ENCODE measurements at regions of chr10 and their contacts with region 1.

Region 1: DNA sequence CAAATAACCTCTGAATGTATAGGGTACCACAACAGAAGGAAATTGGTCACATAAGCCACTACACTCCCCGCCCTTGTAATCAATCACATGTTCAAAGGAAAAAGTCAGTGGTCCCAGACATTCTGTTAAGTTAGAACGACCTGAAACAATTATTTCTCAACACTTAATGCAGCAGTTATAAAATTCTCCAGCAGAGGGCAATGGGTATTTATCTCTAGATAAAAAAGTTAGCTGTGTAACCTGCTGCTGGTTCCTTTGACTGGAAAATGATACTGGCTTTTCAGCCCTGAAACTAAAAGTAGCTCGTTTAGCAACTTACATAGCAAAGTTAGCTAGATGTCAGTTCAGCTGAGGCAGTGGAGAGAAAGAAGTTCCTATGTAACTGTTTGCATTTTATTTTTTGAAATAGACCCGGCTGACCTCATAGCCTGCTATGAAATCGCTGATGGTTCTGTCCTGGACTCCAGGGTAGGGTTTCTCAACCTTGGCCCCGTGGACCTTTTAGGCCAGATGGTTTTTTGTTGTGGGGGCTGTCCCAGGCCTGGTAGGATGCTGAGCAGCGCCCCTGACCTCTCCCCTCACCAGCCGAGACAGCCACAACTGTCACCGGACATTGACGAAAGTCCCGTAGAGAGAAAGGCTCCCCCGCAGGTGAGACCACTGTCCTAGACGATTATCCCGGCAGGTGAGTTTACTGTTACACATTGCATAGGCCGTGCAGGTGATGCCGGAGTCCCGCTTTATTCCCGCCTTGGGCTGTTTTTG is 40.2 kb upstream of the PROSER2 start:
- DNase-seq: peak; percentile 24
- ATAC-seq: peak; percentile 64
- H3K4me3 ChIP-seq: no peak overlapping the region
- H3K27ac ChIP-seq: no peak overlapping the region
- H3K4me1 ChIP-seq: no peaks in the 10 kb centered on the region
- H3K27me3 ChIP-seq: no peaks in the 10 kb centered on the region
- CTCF ChIP-seq: peak; percentile 71

Region 2: GRCh38 chr10:11424456-11425297 is 358.3 kb before region 1 on chr10:
- CTCF ChIA-PET with region 1: no interaction called
- POLR2A ChIA-PET with region 1: interaction called, 10 read pairs
- in situ Hi-C with region 1: no loop called
- intact Hi-C with region 1: no loop called
- DNase-seq: peak; percentile 25
- ATAC-seq: peak; percentile 89
- H3K4me3 ChIP-seq: no peak overlapping the region
- H3K27ac ChIP-seq: no peak overlapping the region
- H3K4me1 ChIP-seq: no peaks in the 10 kb centered on the region
- H3K27me3 ChIP-seq: no peaks in the 10 kb centered on the region
- CTCF ChIP-seq: peak; percentile 89

Region 3: DNA sequence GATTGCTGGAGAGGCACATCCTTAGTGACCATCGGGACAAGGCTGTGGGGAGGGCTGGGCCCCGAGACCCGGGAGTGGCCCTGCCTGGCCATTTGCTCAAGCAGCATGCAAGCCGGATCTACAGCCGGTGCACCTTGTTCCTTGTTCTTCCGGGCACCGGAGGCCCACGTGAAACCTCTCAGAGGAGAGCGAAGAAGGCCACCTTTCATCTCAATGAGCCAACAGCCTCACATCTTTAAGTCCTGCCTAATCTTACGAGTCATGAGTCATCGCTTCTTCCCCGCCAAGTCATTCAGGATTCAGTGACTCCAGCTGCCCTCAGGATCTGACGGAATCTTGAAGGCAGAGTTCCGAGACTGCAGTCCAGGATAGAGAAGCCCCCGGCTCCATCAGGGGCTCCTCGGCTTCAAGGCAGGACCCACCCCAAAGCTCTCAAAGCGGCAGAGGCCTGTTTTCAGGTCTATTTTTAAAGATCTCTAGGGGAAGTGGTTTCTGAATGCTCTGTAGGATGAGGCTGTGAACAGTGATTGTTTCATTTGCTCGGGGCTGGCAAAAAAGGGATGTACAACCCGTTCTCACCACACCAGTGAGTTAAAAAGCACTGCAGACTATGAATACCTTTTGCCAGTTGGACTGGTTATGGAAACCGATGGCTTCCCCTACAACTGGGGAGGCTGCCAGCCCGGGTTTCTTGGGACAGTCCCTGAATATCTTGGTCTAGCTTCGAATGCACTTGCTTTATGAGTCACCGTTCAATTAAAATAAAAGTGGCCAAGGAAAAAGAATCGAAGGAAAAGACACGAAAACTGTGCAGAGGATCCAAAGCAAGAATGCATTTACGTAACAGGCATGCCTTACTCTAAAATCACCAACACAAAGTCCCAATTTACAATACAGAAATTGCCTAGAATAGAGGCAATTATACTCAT is 98.0 kb before region 1 on chr10:
- CTCF ChIA-PET with region 1: no interaction called
- POLR2A ChIA-PET with region 1: no interaction called
- in situ Hi-C with region 1: no loop called
- intact Hi-C with region 1: no loop called
- DNase-seq: peak; percentile 43
- ATAC-seq: peak; percentile 90
- H3K4me3 ChIP-seq: peak overlapping the region; percentile 18 to 59
- H3K27ac ChIP-seq: peak overlapping the region; percentile 66
- H3K4me1 ChIP-seq: peaks cover 7% of the 10 kb centered on the region; the same call in 1 of the 2 replicates
- H3K27me3 ChIP-seq: no peaks in the 10 kb centered on the region
- CTCF ChIP-seq: no peak

Region 4: GRCh38 chr10:11750420-11750819 is 32.6 kb before region 1 on chr10:
- CTCF ChIA-PET with region 1: no interaction called
- POLR2A ChIA-PET with region 1: interaction called, 14 read pairs
- in situ Hi-C with region 1: no loop called
- intact Hi-C with region 1: no loop called
- DNase-seq: no peak
- ATAC-seq: no peak
- H3K4me3 ChIP-seq: no peak overlapping the region
- H3K27ac ChIP-seq: no peak overlapping the region
- H3K4me1 ChIP-seq: no peaks in the 10 kb centered on the region
- H3K27me3 ChIP-seq: no peaks in the 10 kb centered on the region
- CTCF ChIP-seq: no peak

Region 5: DNA sequence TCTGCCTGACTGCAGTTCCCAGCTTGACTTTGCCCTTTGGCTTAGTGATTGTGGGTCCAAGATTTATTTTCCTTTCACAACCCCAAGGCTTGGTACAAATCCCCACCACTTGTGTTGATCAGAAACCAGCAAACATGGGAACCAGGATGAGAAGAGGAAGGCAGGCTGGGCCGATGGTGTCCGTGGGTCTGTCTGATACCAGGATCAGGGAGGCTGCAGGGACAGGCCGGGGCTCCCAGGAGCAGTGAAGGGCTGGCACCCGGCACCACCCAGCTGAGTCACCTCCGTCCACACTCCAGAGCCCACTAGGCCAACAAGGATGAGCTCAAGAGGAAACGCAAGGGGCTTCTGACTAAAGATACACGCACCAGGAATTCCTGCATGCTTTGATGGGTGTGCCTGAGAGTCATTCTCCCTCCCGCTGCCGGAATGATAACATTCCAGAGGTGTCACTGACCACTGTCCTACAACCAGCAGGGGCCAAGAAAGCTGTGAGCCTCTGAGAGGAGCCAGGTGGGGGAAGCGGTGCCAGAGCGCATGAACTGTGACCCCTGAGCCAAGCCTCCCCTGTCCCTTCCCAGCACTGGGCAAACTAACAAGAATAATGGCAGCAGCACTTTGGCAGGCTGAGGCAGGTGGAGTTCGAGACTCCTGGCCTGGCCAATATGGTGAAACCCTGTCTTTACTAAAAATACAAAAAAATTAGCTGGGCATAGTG is 10.9 kb after region 1 on chr10:
- CTCF ChIA-PET with region 1: interaction called, 11 read pairs
- POLR2A ChIA-PET with region 1: no interaction called
- in situ Hi-C with region 1: no loop called
- intact Hi-C with region 1: no loop called
- DNase-seq: no peak
- ATAC-seq: no peak
- H3K4me3 ChIP-seq: no peak overlapping the region
- H3K27ac ChIP-seq: no peak overlapping the region
- H3K4me1 ChIP-seq: no peaks in the 10 kb centered on the region
- H3K27me3 ChIP-seq: no peaks in the 10 kb centered on the region; the same call in 1 of the 2 replicates
- CTCF ChIP-seq: no peak

Region 6: GRCh38 chr10:11986593-11987216 is 203.7 kb after region 1 on chr10:
- CTCF ChIA-PET with region 1: interaction called, 3 read pairs
- POLR2A ChIA-PET with region 1: no interaction called
- in situ Hi-C with region 1: no loop called
- intact Hi-C with region 1: loop called (anchors 10 kb)
- DNase-seq: peak; percentile 55
- ATAC-seq: peak; percentile 66; the same call in 1 of the 2 replicates
- H3K4me3 ChIP-seq: no peak overlapping the region
- H3K27ac ChIP-seq: no peak overlapping the region
- H3K4me1 ChIP-seq: no peaks in the 10 kb centered on the region
- H3K27me3 ChIP-seq: no peaks in the 10 kb centered on the region
- CTCF ChIP-seq: peak; percentile 81

Measured in Panc1 (cell line).